ENCODE measurements at regions of chr11 and their contacts with region 1.

Region 1: GRCh38 chr11:133134314-133135173 is 397.8 kb downstream of the OPCML start:
- DNase-seq: peak; percentile 17
- H3K4me3 ChIP-seq: no peak overlapping the region
- H3K27ac ChIP-seq: no peak overlapping the region
- H3K4me1 ChIP-seq: no peaks in the 10 kb centered on the region
- H3K27me3 ChIP-seq: no peaks in the 10 kb centered on the region
- CTCF ChIP-seq: peak; percentile 63 to 79
- POLR2A ChIP-seq: no peak

Region 2: GRCh38 chr11:133153031-133153430 is 18.5 kb after region 1 on chr11:
- CTCF ChIA-PET with region 1: no interaction called
- POLR2A ChIA-PET with region 1: no interaction called
- dilution Hi-C with region 1: no loop called
- intact Hi-C with region 1: no loop called
- DNase-seq: no peak
- H3K4me3 ChIP-seq: no peak overlapping the region
- H3K27ac ChIP-seq: no peak overlapping the region
- H3K4me1 ChIP-seq: no peaks in the 10 kb centered on the region
- H3K27me3 ChIP-seq: no peaks in the 10 kb centered on the region
- CTCF ChIP-seq: no peak
- POLR2A ChIP-seq: no peak

Region 3: DNA sequence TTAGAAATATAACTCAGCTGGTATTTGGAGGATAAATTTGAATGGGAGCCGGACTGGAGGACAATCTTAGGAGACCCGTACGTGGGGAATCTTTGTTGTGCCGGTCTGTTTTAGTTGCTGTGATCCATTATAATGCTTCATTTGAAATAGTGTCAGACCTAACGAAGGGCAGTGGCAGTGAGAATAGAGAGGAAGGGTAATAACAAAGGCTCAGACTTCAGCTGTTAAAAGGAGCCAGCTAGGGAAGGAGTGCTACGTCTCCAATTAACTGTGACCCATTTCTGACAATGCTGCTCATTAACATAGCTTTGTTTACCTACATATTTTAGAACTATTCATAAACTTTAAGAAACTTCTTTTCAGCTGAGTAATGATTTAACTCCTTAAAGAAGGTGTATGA is 150.8 kb after region 1 on chr11:
- CTCF ChIA-PET with region 1: no interaction called
- POLR2A ChIA-PET with region 1: no interaction called
- dilution Hi-C with region 1: no loop called
- intact Hi-C with region 1: no loop called
- DNase-seq: no peak
- H3K4me3 ChIP-seq: no peak overlapping the region
- H3K27ac ChIP-seq: no peak overlapping the region
- H3K4me1 ChIP-seq: no peaks in the 10 kb centered on the region
- H3K27me3 ChIP-seq: no peaks in the 10 kb centered on the region
- CTCF ChIP-seq: no peak
- POLR2A ChIP-seq: no peak

Region 4: DNA sequence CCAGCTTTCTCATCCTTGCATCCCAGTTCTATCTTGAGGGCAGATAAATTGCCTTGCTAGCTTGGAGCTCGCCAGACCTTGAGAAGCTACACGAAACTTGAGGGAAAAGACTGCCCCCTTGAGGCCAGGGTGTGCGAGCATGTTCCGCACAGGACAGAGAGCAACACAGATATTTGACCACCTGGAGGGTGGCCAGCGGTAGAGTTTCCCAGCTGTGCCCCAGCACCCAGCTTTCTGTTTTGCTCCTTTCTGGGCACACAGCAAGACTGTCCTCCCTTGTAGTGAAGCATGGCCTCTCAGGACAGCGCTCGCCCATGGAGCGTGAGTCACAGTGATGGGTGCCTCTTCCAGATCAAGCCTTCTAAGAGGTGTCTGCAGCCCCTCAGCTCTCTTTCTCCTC is 687.2 kb after region 1 on chr11:
- CTCF ChIA-PET with region 1: no interaction called
- POLR2A ChIA-PET with region 1: no interaction called
- dilution Hi-C with region 1: no loop called
- intact Hi-C with region 1: loop called (anchors 1 kb)
- DNase-seq: no peak
- H3K4me3 ChIP-seq: no peak overlapping the region
- H3K27ac ChIP-seq: no peak overlapping the region
- H3K4me1 ChIP-seq: no peaks in the 10 kb centered on the region
- H3K27me3 ChIP-seq: no peaks in the 10 kb centered on the region
- CTCF ChIP-seq: peak; percentile 35 to 53
- POLR2A ChIP-seq: no peak

Region 5: DNA sequence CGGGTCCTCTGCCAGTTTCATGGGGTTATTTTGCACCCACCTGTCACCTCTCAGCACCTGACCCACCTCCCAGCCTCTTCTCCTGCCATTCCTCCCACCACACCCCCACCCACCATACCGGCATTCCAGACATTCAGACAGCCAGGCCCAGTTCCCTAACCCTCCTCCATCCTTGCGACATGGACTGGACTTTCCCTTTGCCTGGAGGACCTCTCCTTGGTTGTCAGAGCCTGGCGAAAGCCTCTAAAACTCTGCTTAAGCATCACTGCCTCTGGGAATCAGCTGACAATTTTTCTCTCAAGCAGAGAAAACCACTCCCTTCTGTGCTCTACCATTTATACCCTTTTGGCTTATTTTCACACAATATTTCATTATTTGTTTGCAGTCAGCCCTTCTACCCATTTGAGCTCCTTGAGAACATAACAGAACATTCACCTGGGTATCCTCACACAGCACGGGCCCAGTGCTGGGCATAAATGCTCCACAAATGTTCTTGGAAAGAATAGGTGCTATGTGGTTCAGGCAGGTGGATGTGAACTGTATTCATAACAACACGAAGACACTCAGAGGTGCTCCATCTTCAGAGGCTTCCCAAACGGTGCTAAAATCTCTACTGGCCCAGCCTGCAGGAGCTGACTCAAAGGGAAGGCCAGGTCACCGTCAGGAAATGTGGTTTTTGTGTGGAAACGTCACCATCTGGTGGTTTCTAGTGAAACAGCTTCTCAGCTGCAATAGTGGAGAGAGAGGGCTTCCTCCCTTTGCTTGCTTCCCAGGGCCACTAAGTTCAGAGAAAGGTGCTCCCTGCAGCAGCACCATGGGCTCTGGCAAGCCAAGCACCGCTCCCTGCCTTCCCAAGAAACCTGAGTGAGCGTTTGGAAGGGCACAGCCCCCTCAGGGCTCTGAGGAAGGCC is 700.4 kb after region 1 on chr11:
- CTCF ChIA-PET with region 1: interaction called, 15 read pairs
- POLR2A ChIA-PET with region 1: no interaction called
- dilution Hi-C with region 1: no loop called
- intact Hi-C with region 1: no loop called
- DNase-seq: peak; percentile 43
- H3K4me3 ChIP-seq: no peak overlapping the region
- H3K27ac ChIP-seq: no peak overlapping the region
- H3K4me1 ChIP-seq: no peaks in the 10 kb centered on the region
- H3K27me3 ChIP-seq: no peaks in the 10 kb centered on the region
- CTCF ChIP-seq: peak; percentile 60
- POLR2A ChIP-seq: no peak

Measured in endothelial cell of umbilical vein (primary cell).